IMR-90 (cell line): ENCODE measurements at regions of chr5 and their contacts with region 1.

Region 1: DNA sequence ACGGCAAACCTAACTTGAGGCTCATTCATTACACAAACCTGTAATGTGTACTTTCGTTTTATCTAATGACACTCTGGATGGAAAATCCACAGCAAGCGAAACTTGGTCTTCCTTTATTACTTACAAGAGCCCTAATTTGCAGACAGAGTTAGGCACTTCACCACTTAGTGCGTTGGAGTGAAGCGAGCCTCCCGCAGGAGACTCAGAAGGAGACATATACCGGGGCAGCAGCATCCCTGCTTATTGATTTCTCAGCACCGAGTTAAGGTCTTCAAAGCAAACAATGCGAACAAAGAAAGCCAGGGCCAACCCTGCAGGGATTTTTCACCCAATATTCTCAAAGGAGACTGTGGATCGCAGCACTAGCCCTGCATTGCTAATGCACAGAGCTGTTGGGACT is 28.6 kb downstream of the LSM11 start:
- DNase-seq: no peak
- ATAC-seq: no peak
- H3K4me3 ChIP-seq: no peak overlapping the region
- H3K27ac ChIP-seq: no peak overlapping the region
- H3K4me1 ChIP-seq: peaks cover 3% of the 10 kb centered on the region; the same call in 1 of the 2 replicates
- H3K27me3 ChIP-seq: peaks cover 2% of the 10 kb centered on the region; the same call in 1 of the 2 replicates
- CTCF ChIP-seq: no peak
- POLR2A ChIP-seq: no peak
- RAD21 ChIP-seq: no peak

Region 2: DNA sequence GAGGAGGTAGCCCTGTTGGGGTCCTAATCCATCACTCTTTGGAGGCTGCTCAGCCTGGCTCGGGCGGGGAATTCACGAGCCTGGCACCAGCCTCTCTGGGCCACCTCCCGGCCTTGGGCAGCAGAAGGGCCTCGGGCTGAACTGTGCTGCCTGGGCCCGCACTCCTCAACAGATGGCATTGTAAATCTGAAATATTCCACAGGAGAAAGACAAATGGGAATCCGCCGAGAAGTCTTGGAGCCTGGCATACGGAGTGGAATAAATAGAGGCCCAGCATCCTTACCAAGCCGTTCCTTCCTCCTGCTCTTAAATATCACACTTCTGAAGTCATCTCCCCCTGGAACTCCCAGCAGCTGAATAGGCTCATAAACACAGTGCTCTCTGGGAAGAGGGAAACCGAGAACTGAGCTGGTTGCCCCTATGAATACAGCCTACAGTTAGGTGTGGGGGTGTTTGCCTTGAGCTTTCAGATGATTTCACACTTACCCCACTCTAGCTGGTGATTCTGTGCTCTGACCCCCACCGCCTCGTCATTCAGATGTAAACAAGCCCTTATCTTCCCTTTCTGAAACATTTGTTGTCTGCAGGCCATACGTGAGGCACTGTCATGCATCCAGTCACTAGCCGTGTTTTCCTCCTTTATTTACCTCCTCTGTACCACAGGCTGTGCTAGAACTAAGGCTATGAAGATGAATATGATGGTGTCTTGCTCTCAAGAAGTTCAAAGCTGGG is 541.8 kb after region 1 on chr5:
- CTCF ChIA-PET with region 1: no interaction called
- POLR2A ChIA-PET with region 1: no interaction called
- dilution Hi-C with region 1: no loop called
- in situ Hi-C with region 1: no loop called
- intact Hi-C with region 1: loop called (anchors 5 kb)
- DNase-seq: no peak
- ATAC-seq: no peak
- H3K4me3 ChIP-seq: no peak overlapping the region
- H3K27ac ChIP-seq: no peak overlapping the region
- H3K4me1 ChIP-seq: no peaks in the 10 kb centered on the region
- H3K27me3 ChIP-seq: no peaks in the 10 kb centered on the region
- CTCF ChIP-seq: no peak
- POLR2A ChIP-seq: no peak
- RAD21 ChIP-seq: no peak